ENCODE measurements at regions of chr3 and their contacts with region 1.

Region 1: GRCh38 chr3:58188173-58188564 is 22.6 kb downstream of the DNASE1L3 start:
- DNase-seq: no peak
- ATAC-seq: no peak
- H3K4me3 ChIP-seq: no peak overlapping the region
- H3K4me3 Mint-ChIP-seq: no peak overlapping the region
- H3K27ac ChIP-seq: no peak overlapping the region
- H3K27ac Mint-ChIP-seq: no peak overlapping the region
- H3K4me1 ChIP-seq: peaks cover 5% of the 10 kb centered on the region
- H3K4me1 Mint-ChIP-seq: no peaks in the 10 kb centered on the region
- H3K27me3 ChIP-seq: no peaks in the 10 kb centered on the region
- H3K27me3 Mint-ChIP-seq: no peaks in the 10 kb centered on the region
- CTCF ChIP-seq: no peak

Region 2: DNA sequence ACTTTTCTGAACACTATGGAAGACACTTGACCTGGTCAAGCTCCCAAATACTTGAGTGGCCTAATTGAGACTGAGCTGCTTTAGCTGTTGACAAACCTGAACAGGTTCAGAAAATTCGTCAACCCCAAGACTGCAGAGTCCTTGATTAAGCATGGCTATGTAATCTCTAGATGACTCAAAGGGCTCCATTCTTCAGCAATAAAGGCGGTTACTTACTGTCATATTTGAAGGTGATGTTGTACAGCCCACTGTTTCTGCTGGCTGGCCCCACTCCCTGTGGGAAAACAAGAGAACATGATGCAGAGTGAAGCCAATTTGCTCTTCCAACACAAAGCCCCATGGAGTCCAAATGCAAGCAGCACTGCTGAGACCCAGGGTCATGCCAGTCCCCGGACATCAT is 1068.1 kb before region 1 on chr3:
- CTCF ChIA-PET with region 1: no interaction called
- POLR2A ChIA-PET with region 1: no interaction called
- intact Hi-C with region 1: no loop called
- DNase-seq: no peak
- ATAC-seq: no peak
- H3K4me3 ChIP-seq: no peak overlapping the region
- H3K4me3 Mint-ChIP-seq: no peak overlapping the region
- H3K27ac ChIP-seq: no peak overlapping the region
- H3K27ac Mint-ChIP-seq: no peak overlapping the region
- H3K4me1 ChIP-seq: no peaks in the 10 kb centered on the region
- H3K4me1 Mint-ChIP-seq: no peaks in the 10 kb centered on the region
- H3K27me3 ChIP-seq: peaks cover 0 to 2% of the 10 kb centered on the region in 2 experiments
- H3K27me3 Mint-ChIP-seq: peaks cover 20% of the 10 kb centered on the region
- CTCF ChIP-seq: no peak

Region 3: DNA sequence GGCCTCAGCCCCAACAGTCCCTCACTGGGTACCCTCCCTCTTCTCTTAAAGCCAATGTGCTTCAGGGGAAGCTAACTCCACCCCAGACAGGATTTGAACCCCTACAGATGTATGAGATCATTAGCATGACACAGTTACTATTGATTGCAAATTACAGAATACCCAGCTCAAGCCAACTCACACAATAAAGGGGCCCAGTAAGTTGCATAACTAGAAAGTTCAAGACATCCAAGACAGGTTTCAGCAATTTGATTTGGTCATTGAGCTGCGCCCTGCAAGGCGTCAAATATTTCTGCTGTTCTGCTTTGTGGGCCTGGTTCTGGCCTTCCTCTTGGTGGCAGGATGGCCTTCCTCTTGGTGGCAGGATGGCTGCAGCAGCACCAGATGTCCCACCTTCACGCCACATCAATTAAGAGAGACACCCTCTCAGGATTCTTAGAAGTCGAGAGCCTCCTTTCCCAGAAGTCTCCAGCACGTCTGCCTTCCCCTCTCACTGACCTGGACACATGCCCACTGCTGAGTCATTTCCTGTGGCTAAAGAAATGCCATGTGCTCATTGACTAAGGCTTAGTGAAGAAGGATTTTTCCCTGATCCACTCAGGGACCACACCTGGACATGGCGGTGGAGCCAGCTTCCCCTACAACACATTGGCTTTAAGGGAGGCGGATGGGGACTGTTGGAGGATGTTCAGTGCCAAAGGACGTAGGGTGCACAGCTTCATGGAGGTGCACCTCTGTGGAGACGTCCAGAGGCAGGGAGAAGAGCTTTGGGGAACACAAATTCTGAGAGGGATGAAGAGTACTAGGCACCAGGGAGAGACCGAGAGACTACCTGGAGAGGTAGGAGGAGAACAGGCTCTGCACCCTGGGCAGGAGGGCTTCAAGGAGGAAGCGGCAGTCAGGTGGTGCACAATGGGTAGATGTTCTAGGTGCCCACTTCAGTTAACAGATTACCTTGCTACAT is 26.5 kb before region 1 on chr3:
- CTCF ChIA-PET with region 1: no interaction called
- POLR2A ChIA-PET with region 1: no interaction called
- intact Hi-C with region 1: no loop called
- DNase-seq: no peak
- ATAC-seq: no peak
- H3K4me3 ChIP-seq: no peak overlapping the region
- H3K4me3 Mint-ChIP-seq: no peak overlapping the region
- H3K27ac ChIP-seq: no peak overlapping the region
- H3K27ac Mint-ChIP-seq: no peak overlapping the region
- H3K4me1 ChIP-seq: no peaks in the 10 kb centered on the region
- H3K4me1 Mint-ChIP-seq: no peaks in the 10 kb centered on the region
- H3K27me3 ChIP-seq: no peaks in the 10 kb centered on the region
- H3K27me3 Mint-ChIP-seq: no peaks in the 10 kb centered on the region
- CTCF ChIP-seq: no peak

Region 4: GRCh38 chr3:58177747-58178527 is 10.2 kb before region 1 on chr3:
- CTCF ChIA-PET with region 1: interaction called, 12 read pairs
- POLR2A ChIA-PET with region 1: no interaction called
- intact Hi-C with region 1: no loop called
- DNase-seq: peak; percentile 80 to 95 (median 88)
- ATAC-seq: peak; percentile 89
- H3K4me3 ChIP-seq: peak overlapping the region; percentile 60
- H3K4me3 Mint-ChIP-seq: peak overlapping the region; percentile 62
- H3K27ac ChIP-seq: no peak overlapping the region
- H3K27ac Mint-ChIP-seq: no peak overlapping the region
- H3K4me1 ChIP-seq: peaks cover 19% of the 10 kb centered on the region
- H3K4me1 Mint-ChIP-seq: peaks cover 13% of the 10 kb centered on the region
- H3K27me3 ChIP-seq: peaks cover 0 to 5% of the 10 kb centered on the region in 2 experiments
- H3K27me3 Mint-ChIP-seq: no peaks in the 10 kb centered on the region
- CTCF ChIP-seq: peak; percentile 96

Region 5: GRCh38 chr3:58217209-58217811 is 29.1 kb after region 1 on chr3:
- CTCF ChIA-PET with region 1: interaction called, 30 read pairs
- POLR2A ChIA-PET with region 1: no interaction called
- intact Hi-C with region 1: loop called (anchors 1 to 2 kb)
- DNase-seq: peak; percentile 21 to 80 (median 43)
- ATAC-seq: peak; percentile 93
- H3K4me3 ChIP-seq: no peak overlapping the region
- H3K4me3 Mint-ChIP-seq: no peak overlapping the region
- H3K27ac ChIP-seq: no peak overlapping the region
- H3K27ac Mint-ChIP-seq: no peak overlapping the region
- H3K4me1 ChIP-seq: peaks cover 6% of the 10 kb centered on the region
- H3K4me1 Mint-ChIP-seq: peaks cover 6% of the 10 kb centered on the region
- H3K27me3 ChIP-seq: no peaks in the 10 kb centered on the region
- H3K27me3 Mint-ChIP-seq: no peaks in the 10 kb centered on the region
- CTCF ChIP-seq: peak; percentile 76

Region 6: DNA sequence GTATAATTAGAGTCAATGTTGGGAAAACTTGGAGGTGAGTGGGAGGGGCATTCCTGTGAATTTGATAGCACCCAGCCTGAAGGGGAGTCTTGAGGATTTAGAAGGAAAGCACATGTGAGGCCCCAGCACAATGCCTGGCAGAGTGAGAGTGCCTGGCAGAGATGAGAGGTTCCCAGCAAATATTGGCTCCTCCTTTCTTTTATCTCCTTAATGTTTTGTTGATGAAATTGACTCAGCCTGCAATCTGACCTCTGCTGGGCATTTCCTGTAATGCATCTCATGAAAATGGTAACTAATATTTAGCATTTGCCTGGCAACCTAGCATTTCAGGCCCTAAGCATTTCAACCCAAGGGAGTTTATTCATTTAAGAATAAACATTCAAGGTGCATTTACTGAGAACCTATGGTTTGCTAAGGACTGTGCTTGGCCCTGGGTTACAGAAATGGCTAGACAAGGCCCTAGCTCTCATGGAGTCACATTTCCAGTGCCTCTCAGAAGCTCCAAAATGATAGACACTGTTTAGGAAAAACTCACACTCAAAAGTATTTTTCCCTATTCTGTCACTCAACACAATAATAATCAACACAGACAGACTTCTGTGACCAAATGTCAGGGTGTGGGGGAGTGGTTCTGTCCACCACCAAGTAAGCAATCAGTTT is 226.5 kb after region 1 on chr3:
- CTCF ChIA-PET with region 1: interaction called, 4 read pairs
- POLR2A ChIA-PET with region 1: no interaction called
- intact Hi-C with region 1: loop called (anchors 2 to 5 kb)
- DNase-seq: peak in 13 of 14 experiments; percentile 8 to 76 (median 21)
- ATAC-seq: peak; percentile 88
- H3K4me3 ChIP-seq: no peak overlapping the region
- H3K4me3 Mint-ChIP-seq: no peak overlapping the region
- H3K27ac ChIP-seq: no peak overlapping the region
- H3K27ac Mint-ChIP-seq: no peak overlapping the region
- H3K4me1 ChIP-seq: no peaks in the 10 kb centered on the region
- H3K4me1 Mint-ChIP-seq: no peaks in the 10 kb centered on the region
- H3K27me3 ChIP-seq: no peaks in the 10 kb centered on the region
- H3K27me3 Mint-ChIP-seq: no peaks in the 10 kb centered on the region
- CTCF ChIP-seq: peak; percentile 75

Region 7: GRCh38 chr3:58532794-58533220 is 344.6 kb after region 1 on chr3:
- CTCF ChIA-PET with region 1: no interaction called
- POLR2A ChIA-PET with region 1: no interaction called
- intact Hi-C with region 1: loop called (anchors 2 to 5 kb)
- DNase-seq: peak; percentile 60 to 90 (median 70)
- ATAC-seq: peak; percentile 99
- H3K4me3 ChIP-seq: no peak overlapping the region
- H3K4me3 Mint-ChIP-seq: no peak overlapping the region
- H3K27ac ChIP-seq: no peak overlapping the region
- H3K27ac Mint-ChIP-seq: no peak overlapping the region
- H3K4me1 ChIP-seq: peaks cover 8% of the 10 kb centered on the region
- H3K4me1 Mint-ChIP-seq: peaks cover 7% of the 10 kb centered on the region
- H3K27me3 ChIP-seq: no peaks in the 10 kb centered on the region
- H3K27me3 Mint-ChIP-seq: no peaks in the 10 kb centered on the region
- CTCF ChIP-seq: peak; percentile 78

Region 8: DNA sequence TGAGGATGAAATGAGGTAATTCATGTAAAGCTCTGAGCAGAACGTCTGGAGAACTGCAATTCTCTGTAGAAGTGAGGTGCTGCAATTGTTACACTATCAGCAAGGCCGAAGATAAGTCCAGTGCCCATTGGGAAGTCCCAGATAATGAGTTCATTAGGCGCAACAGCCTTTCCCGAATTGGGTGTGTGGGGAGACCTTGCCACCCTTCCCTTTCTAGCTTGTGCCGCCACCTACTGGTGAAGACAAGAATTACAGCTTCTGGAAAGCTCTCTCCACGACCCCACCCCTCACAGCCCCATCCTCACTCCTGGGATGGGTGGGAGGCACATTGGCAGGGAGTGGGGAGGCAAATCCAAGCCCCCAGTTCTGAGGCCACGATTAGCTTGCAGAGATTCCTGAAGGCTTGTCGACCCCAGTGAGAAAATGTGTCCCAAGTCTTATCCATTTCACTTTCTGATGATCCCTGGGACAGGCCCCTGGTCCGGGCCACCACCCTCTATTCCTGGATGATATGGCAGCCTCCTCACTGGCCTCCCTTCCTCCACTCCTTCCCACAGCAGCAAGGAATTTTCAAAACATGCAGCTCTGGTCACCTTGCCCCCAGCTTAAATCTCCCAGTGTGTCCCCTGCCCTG is 442.0 kb after region 1 on chr3:
- CTCF ChIA-PET with region 1: interaction called, 4 read pairs
- POLR2A ChIA-PET with region 1: no interaction called
- intact Hi-C with region 1: loop called in 1 of 2 experiments (anchors 5 kb)
- DNase-seq: peak; percentile 28 to 71 (median 46)
- ATAC-seq: peak; percentile 60
- H3K4me3 ChIP-seq: no peak overlapping the region
- H3K4me3 Mint-ChIP-seq: no peak overlapping the region
- H3K27ac ChIP-seq: no peak overlapping the region
- H3K27ac Mint-ChIP-seq: no peak overlapping the region
- H3K4me1 ChIP-seq: peaks cover 3% of the 10 kb centered on the region
- H3K4me1 Mint-ChIP-seq: no peaks in the 10 kb centered on the region
- H3K27me3 ChIP-seq: peaks cover 0 to 4% of the 10 kb centered on the region in 2 experiments
- H3K27me3 Mint-ChIP-seq: no peaks in the 10 kb centered on the region
- CTCF ChIP-seq: peak; percentile 81

Measured in CD4-positive, alpha-beta T cell (primary cell).